SK-N-SH (cell line): ENCODE measurements at regions of chr6 and their contacts with region 1.

Region 1: DNA sequence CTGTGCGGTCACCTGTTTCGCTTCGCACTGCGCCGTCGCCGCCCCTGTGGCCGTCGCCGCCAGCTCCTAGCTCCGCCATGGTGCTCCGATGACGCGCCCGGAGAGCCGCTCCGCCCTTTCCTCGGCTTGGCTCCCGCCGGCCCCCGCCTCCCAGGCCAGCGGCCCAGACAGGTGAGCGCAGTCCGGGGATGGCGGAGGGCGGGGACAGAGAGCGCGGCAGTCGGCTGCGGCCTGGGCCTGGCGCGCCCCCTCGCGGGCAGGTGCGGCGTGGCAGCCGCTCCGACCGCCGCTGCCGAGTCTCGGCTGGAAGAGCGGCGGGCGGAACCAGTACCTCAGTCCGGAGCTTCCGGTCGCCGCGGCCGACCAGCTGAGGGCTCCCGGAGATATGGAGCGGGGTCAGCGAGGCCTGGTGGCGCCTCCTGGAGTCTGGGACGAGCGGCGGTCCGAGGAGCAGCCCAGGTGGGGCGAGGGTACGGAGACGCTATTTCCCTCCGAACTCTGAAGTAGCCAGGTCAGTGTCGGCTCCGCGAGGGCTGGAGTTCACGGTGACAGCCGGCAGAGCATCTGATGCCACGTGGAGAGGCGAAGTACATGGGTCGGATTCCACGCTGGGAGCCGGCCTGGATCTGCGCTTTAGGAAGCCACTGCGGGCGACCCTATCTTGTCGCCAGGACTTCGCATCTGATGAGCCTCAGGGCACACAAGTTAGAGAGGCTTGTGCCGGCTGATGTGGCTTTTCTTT is at the start of gene MAP7:
- DNase-seq: peak; percentile 88
- H3K4me3 ChIP-seq: peak within 1 kb of the TSS; percentile 70 to 77
- H3K27ac ChIP-seq: peak within 1 kb of the TSS in 1 of 2 experiments; percentile 55; a peak in 2 of 4 replicates
- H3K4me1 ChIP-seq: peaks cover 0 to 16% of the 10 kb centered on the region in 2 experiments; a peak in 2 of 4 replicates
- H3K27me3 ChIP-seq: peaks cover 12% of the 10 kb centered on the region; the same call in 1 of the 2 replicates
- CTCF ChIP-seq: peak; percentile 69
- EP300 ChIP-seq: no peak
- RAD21 ChIP-seq: peak; percentile 54
- polyA plus RNA-seq, gene MAP7: 0.76 and 0.97 TPM in 2 replicates

Region 2: GRCh38 chr6:136249811-136250685 is 300.5 kb before region 1 on chr6 and contains the start of gene MTFR2:
- CTCF ChIA-PET with region 1: interaction called, 11 read pairs
- POLR2A ChIA-PET with region 1: no interaction called
- DNase-seq: peak; percentile 90
- H3K4me3 ChIP-seq: peak within 1 kb of the TSS; percentile 77 to 98
- H3K27ac ChIP-seq: peak within 1 kb of the TSS; percentile 59 to 66
- H3K4me1 ChIP-seq: peaks cover 0 to 21% of the 10 kb centered on the region in 2 experiments; a peak in 2 of 4 replicates
- H3K27me3 ChIP-seq: no peaks in the 10 kb centered on the region
- CTCF ChIP-seq: no peak
- EP300 ChIP-seq: no peak
- RAD21 ChIP-seq: no peak
- polyA plus RNA-seq, gene MTFR2: 7.4 and 9.2 TPM in 2 replicates

Region 3: GRCh38 chr6:136306466-136306865 is 244.0 kb before region 1 on chr6:
- CTCF ChIA-PET with region 1: interaction called, 10 read pairs
- POLR2A ChIA-PET with region 1: no interaction called
- DNase-seq: no peak
- H3K4me3 ChIP-seq: no peak overlapping the region
- H3K27ac ChIP-seq: no peak overlapping the region
- H3K4me1 ChIP-seq: peaks cover 0 to 6% of the 10 kb centered on the region in 2 experiments; a peak in 1 of 4 replicates
- H3K27me3 ChIP-seq: no peaks in the 10 kb centered on the region
- CTCF ChIP-seq: no peak
- EP300 ChIP-seq: no peak
- RAD21 ChIP-seq: no peak

Region 4: DNA sequence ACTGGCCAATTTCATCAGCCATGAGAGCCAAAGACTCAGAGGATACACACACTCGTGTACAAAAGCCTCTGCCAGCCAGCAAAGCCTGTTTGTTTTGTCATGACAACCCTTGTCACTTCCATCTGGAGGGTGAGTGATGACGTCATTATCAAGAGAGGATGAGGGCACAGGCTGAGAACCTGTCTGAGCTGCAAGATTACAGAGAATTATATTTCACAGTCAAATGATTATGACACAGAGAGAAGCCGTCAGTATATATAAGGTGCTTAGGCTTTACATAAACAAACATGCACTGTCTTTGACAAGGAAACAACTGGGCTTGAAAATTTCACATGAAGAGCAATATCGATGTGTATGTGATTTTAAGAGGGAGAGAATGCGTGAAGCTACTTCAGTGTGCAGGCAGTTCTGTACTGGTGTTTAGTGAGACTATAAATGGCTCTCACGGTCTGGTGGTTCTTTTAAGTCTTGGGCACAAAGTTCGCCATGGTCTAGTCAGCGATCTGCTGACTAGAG is 224.4 kb before region 1 on chr6:
- CTCF ChIA-PET with region 1: interaction called, 20 read pairs
- POLR2A ChIA-PET with region 1: no interaction called
- DNase-seq: peak; percentile 54
- H3K4me3 ChIP-seq: no peak overlapping the region
- H3K27ac ChIP-seq: no peak overlapping the region
- H3K4me1 ChIP-seq: peaks cover 0 to 9% of the 10 kb centered on the region in 2 experiments; a peak in 2 of 4 replicates
- H3K27me3 ChIP-seq: no peaks in the 10 kb centered on the region
- CTCF ChIP-seq: no peak
- EP300 ChIP-seq: no peak
- RAD21 ChIP-seq: no peak

Region 5: DNA sequence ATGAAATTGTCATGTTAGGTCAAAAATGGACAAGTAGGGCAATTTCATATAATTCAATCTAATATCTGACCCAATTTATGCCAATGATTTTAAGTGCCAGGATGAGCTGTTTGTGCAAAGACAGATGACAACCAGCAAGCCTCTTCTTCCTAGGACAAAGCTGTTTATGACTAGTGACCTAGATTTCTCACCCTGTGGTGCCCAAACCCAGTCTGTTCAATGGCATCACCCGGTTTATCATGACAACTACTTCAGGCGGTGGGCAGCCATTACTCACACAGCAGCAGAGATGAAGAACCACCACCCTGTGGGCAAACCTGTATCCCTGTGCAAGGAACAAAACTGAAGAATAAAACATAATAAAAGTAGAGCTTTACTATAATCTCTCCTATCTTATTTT is 59.2 kb before region 1 on chr6:
- CTCF ChIA-PET with region 1: interaction called, 10 read pairs
- POLR2A ChIA-PET with region 1: no interaction called
- DNase-seq: peak; percentile 31
- H3K4me3 ChIP-seq: no peak overlapping the region
- H3K27ac ChIP-seq: peak overlapping the region; percentile 20 to 99; a peak in 3 of 4 replicates
- H3K4me1 ChIP-seq: peaks cover 0 to 27% of the 10 kb centered on the region in 2 experiments; a peak in 2 of 4 replicates
- H3K27me3 ChIP-seq: no peaks in the 10 kb centered on the region
- CTCF ChIP-seq: no peak
- EP300 ChIP-seq: 0 out of 4 replicates have a peak, but pooled peaks of 1 of the 2 experiments have one; percentile 6
- RAD21 ChIP-seq: no peak

Region 6: GRCh38 chr6:136539967-136540652 is 10.4 kb before region 1 on chr6:
- CTCF ChIA-PET with region 1: interaction called, 12 read pairs
- POLR2A ChIA-PET with region 1: no interaction called
- DNase-seq: no peak
- H3K4me3 ChIP-seq: no peak overlapping the region
- H3K27ac ChIP-seq: no peak overlapping the region
- H3K4me1 ChIP-seq: peaks cover 0 to 4% of the 10 kb centered on the region in 2 experiments; a peak in 1 of 4 replicates
- H3K27me3 ChIP-seq: no peaks in the 10 kb centered on the region
- CTCF ChIP-seq: no peak
- EP300 ChIP-seq: no peak
- RAD21 ChIP-seq: no peak

Region 7: DNA sequence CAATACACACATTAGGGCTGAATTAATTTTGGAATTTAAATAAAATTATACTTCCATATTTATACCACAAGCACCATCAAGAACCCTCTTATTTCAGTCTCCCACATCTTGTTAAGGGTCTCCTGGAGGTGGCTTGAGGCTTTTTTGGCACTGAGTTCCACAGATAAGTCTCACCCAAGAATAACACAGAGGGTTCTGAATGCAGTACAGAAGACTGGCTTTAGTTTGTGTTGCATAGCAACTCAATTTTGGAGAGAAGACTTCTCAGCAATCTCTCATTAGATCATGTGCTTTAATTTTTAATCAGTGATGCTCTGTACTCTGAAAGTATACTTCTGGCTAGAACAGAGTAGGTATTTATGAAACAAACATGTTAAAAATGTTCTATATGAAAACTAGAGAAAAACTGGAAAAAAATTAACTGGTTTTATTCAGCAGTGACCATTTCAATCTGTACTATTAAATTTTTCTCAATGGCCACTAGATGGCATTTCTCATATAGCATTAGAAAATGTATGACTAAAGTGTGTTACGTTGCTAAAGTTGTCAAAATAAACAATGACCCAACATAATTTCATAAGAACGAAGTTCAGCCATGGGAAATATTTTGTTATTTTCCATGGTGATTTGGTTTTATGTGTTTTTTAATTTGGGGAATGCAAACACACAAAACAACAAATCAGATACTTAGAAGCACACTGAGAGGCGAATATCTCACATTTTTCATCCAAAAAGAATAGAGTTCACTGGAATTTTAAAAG is 32.4 kb after region 1 on chr6:
- CTCF ChIA-PET with region 1: interaction called, 10 read pairs
- POLR2A ChIA-PET with region 1: no interaction called
- DNase-seq: peak; percentile 36
- H3K4me3 ChIP-seq: no peak overlapping the region
- H3K27ac ChIP-seq: peak overlapping the region in 1 of 2 experiments; percentile 75; a peak in 2 of 4 replicates
- H3K4me1 ChIP-seq: peaks cover 0 to 6% of the 10 kb centered on the region in 2 experiments; a peak in 1 of 4 replicates
- H3K27me3 ChIP-seq: no peaks in the 10 kb centered on the region
- CTCF ChIP-seq: peak; percentile 73
- EP300 ChIP-seq: no peak
- RAD21 ChIP-seq: peak; percentile 67

Region 8: DNA sequence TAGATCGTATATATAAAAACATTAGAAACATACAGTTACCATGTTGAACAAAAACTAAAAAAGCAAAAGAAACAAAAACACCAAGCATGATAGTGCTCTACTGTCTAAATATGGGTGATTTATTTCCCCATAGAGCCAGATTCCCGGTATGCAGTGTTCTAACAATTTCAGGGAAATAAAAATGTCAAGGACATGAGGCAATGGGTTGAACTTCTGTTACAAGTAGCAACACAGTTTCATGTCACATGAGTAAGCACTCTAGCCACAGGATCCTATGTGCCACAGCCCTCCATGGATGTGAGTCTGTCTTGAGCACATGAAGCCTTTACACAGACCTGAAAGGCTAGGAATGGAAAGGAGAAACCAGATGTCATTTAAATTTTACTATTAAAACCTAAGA is 145.7 kb after region 1 on chr6:
- CTCF ChIA-PET with region 1: no interaction called
- POLR2A ChIA-PET with region 1: no interaction called
- DNase-seq: no peak
- H3K4me3 ChIP-seq: no peak overlapping the region
- H3K27ac ChIP-seq: no peak overlapping the region
- H3K4me1 ChIP-seq: no peaks in the 10 kb centered on the region
- H3K27me3 ChIP-seq: no peaks in the 10 kb centered on the region
- CTCF ChIP-seq: no peak
- EP300 ChIP-seq: no peak
- RAD21 ChIP-seq: no peak

Region 9: DNA sequence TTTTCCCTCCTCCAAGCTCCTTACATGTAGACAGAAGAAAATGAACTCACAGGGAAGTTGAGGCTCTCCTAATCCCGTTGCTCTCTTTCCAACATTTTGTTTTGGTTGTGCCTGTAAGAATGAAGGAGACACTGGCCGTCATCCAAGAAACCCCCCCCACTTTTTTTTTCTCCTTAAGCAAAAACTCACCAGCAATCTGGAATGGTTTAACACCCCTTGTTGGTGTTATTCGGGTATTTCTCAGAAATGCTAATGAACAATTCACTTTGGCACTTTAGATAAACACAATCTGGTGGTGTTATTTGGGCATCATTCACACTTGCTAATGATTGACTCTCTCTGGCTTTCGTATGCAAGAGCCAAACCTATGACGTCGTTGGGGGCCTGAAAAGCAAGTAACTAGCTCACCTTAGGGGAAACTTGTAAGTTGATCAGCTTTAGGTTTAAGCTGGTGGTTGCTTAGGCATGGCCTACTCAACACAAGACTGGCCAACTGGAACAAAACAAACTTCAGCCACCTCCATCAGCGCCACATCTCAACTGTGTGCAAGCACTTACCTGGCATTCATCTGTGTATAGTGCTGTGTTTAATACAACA is 968.0 kb after region 1 on chr6:
- CTCF ChIA-PET with region 1: no interaction called
- POLR2A ChIA-PET with region 1: no interaction called
- DNase-seq: no peak
- H3K4me3 ChIP-seq: no peak overlapping the region
- H3K27ac ChIP-seq: no peak overlapping the region
- H3K4me1 ChIP-seq: no peaks in the 10 kb centered on the region
- H3K27me3 ChIP-seq: no peaks in the 10 kb centered on the region; the same call in 1 of the 2 replicates
- CTCF ChIP-seq: no peak
- EP300 ChIP-seq: no peak
- RAD21 ChIP-seq: no peak